ENCODE measurements at regions of chr17 and their contacts with region 1.

Region 1: DNA sequence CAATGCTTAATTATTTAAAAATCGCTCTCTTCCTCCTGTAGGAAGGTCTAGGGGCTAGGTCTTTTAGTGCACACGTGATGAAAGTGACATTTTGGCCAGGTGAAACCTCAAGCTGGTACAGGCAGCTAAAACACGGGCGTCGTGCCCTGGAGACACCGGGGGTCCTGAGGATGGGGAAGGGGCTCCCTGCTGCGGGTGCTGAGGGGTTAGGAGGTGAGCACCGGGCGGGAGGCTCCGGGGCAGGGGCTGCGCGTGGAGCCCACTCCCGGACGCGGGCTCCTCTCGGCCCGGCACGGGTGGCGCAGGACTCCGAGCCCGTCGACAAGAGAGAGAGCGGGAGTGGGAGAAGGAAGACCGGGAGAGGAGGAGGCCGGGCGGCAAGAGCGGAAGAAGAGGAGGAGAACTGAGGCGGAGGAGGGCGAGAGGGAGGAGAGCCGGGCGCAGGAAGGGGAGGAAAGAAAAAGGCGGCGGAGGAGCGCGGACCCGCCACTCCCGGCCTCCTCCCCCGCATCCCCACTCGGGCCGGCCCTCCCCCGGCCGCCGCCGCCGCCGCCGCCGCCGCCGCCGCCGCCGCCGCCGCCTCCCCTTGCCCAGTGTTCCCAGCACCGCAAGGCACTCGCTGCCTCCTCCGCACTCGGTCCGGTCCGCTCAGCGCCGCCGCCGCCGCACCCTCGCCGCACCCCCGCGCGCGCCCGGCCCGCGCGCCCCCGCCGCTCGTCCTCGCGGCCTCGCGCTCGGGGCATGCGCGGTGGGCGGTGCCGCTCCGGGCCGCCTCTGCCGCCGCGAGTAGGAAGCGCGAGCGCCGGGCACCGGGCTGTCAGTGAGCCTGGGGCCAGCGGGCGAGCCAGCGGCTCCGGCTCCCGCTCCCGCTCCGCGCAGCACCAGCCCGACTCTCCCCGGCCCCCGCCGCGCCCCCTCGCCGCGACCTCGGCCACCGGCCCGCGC is at the start of gene PRKCA:
- DNase-seq: peak; percentile 82
- ATAC-seq: peak; percentile 87 to 90
- total RNA-seq, gene PRKCA: 6.4 to 7.7 TPM

Region 2: DNA sequence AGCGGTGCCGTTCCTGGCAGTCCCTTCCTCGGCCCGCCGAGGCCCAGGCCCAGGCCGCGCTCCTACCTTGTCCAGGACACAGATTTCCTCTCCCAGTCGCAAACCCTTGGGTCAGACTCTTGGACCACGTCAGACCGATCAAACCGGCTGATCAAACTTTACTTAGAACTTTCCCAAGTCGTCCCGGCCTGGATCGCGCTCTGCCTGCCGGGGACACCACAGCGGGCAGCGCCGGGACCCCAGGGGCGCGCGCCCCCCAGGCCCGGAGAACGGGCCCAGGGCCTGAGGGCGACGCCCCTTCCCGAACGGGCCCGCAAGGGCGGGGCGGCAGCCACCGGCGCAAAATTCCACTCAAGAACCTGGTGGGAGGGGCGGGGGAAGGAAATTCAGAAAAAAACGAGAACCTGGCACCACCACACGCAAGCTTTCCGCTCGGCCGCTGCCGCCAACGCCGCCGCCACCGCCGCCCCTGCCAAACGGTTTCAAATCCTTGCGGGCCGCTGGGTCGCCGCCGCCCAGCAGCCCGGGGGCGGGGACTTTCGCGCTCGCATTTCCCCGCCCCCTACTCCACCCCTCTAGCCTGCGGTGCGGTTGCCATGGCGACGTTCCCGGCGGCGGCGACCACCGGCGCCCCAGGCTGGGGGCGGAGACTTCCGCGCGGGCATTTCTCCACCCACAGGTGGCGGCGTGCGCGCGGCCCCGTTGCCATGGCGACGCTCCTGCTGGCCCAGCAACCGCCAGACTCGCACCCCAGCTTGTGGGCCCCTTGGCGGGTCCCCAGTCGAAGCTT is 110.3 kb before region 1 on chr17 and contains the start of gene CEP112:
- intact Hi-C with region 1: no loop called
- DNase-seq: peak; percentile 89
- ATAC-seq: peak; percentile 91 to 95
- total RNA-seq, gene CEP112: 18.9 to 21.0 TPM

Region 3: GRCh38 chr17:66364990-66365490 is 63.0 kb after region 1 on chr17:
- intact Hi-C with region 1: no loop called
- DNase-seq: no peak
- ATAC-seq: peak in 1 of 2 donors; percentile 69

Region 4: GRCh38 chr17:66567234-66568170 is 265.4 kb after region 1 on chr17:
- intact Hi-C with region 1: loop called in 1 of 2 experiments (anchors 5 kb)
- DNase-seq: peak; percentile 81
- ATAC-seq: peak; percentile 80 to 87